CD4-positive, alpha-beta T cell (primary cell): ENCODE measurements at regions of chr20 and their contacts with region 1.

Region 1: GRCh38 chr20:43448748-43449535 is 8.8 kb upstream of the SRSF6 start:
- DNase-seq: peak; percentile 16 to 72 (median 32)
- ATAC-seq: peak; percentile 75
- H3K4me3 ChIP-seq: no peak overlapping the region
- H3K4me3 Mint-ChIP-seq: no peak overlapping the region
- H3K27ac ChIP-seq: no peak overlapping the region
- H3K27ac Mint-ChIP-seq: no peak overlapping the region
- H3K4me1 ChIP-seq: peaks cover 4% of the 10 kb centered on the region
- H3K4me1 Mint-ChIP-seq: peaks cover 6% of the 10 kb centered on the region
- H3K27me3 ChIP-seq: peaks cover 5 to 12% of the 10 kb centered on the region in 2 experiments
- H3K27me3 Mint-ChIP-seq: peaks cover 49% of the 10 kb centered on the region
- CTCF ChIP-seq: peak; percentile 76

Region 2: DNA sequence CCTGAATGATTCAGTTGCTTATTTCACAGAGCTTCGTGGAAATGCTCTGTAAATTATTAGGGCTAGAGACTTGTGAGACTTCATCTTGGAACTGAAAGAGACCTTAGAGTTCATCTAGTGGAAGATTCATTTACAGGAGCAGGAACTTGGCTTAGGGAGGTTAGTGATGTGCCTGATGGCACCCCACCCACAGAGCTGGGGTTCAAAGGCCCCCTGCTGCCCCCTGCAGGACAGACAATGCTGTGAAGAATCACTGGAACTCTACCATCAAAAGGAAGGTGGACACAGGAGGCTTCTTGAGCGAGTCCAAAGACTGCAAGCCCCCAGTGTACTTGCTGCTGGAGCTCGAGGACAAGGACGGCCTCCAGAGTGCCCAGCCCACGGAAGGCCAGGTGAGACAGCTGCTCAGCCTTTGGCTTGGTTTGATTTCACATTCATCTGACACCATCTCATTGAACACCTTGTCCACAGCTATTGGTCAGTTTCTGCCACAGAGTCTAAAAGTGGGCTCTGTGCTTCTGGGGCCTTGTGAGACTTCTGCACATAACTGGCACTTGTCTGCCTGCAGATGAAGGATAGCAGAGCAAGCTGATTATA is 243.1 kb after region 1 on chr20:
- CTCF ChIA-PET with region 1: interaction called, 3 read pairs
- POLR2A ChIA-PET with region 1: no interaction called
- intact Hi-C with region 1: loop called in 1 of 2 experiments (anchors 2 kb)
- DNase-seq: peak; percentile 11 to 68 (median 34)
- ATAC-seq: no peak
- H3K4me3 ChIP-seq: no peak overlapping the region
- H3K4me3 Mint-ChIP-seq: no peak overlapping the region
- H3K27ac ChIP-seq: no peak overlapping the region
- H3K27ac Mint-ChIP-seq: no peak overlapping the region
- H3K4me1 ChIP-seq: no peaks in the 10 kb centered on the region
- H3K4me1 Mint-ChIP-seq: no peaks in the 10 kb centered on the region
- H3K27me3 ChIP-seq: no peaks in the 10 kb centered on the region
- H3K27me3 Mint-ChIP-seq: no peaks in the 10 kb centered on the region
- CTCF ChIP-seq: peak; percentile 52

Region 3: DNA sequence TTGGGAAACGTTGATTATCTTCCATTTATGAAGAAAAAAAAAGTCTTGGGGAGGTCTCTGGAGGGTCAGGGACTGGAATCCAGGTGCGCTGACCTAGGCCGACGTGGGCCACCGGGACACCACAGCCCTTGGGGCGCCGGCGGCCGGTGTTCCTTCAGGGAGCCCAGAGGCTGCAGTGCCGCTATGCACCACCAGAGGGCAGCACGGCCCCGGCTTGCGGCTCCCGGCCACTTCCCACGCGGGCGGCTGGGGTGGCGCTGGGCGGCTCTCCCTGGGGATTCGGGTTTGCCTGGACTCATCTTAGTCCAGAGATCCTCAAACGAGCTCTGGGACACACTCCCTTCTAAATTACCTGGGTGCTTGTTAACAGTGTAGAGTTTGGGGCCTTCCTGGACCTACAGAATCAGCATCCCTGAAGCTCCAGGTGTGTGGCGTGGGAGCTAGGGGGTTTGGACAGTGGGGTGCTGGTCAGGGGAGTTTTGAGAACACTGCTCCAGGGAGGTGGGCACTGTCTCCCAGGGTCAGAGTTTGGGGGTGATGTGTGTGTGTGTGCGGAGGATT is 300.9 kb after region 1 on chr20:
- CTCF ChIA-PET with region 1: no interaction called
- POLR2A ChIA-PET with region 1: no interaction called
- intact Hi-C with region 1: loop called in 1 of 2 experiments (anchors 2 kb)
- DNase-seq: peak; percentile 54 to 92 (median 80)
- ATAC-seq: peak; percentile 84
- H3K4me3 ChIP-seq: no peak overlapping the region
- H3K4me3 Mint-ChIP-seq: no peak overlapping the region
- H3K27ac ChIP-seq: no peak overlapping the region
- H3K27ac Mint-ChIP-seq: no peak overlapping the region
- H3K4me1 ChIP-seq: peaks cover 33% of the 10 kb centered on the region
- H3K4me1 Mint-ChIP-seq: peaks cover 30% of the 10 kb centered on the region
- H3K27me3 ChIP-seq: no peaks in the 10 kb centered on the region
- H3K27me3 Mint-ChIP-seq: no peaks in the 10 kb centered on the region
- CTCF ChIP-seq: peak; percentile 99

Region 4: DNA sequence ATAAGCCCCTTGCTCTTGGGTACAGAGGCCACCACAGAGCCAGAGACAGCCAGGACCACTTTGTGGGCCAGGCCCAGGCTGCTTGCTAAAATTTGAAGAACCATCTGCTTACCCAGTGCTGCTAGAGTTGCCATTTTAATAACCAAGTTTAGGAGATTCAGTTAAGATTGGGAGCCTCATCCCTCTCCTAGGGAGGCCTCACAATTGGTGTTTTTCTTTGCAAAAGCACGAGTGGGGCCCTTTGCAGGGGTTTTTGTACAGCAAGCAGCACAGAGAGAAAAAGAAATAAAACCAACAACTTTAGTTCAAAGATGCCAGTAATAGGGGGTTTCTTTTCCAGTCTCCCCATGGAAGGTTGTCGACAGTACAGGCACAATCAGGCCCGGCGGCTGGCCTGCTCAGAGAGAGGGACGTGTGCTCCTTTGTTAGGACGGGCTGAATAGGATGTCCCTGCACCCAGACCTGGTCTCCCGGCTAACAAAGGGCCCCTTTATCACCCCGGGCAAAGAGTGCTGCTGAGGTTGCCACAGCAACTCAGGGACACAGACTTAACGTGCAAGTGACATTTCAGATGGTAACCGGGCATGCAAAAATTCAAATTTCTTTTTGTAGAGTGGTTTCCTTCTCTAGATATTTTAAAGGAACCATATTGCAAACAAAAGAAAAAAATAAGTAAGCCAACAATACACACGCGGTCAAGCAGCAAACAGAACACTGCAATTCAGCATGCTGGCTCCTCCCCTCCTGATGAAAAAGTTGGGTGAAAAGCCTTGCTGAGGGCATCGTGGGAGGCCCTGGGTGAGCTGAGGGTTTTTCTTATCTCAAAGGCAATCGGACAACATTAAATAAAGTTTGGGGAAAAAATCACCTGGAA is 455.2 kb after region 1 on chr20:
- CTCF ChIA-PET with region 1: no interaction called
- POLR2A ChIA-PET with region 1: no interaction called
- intact Hi-C with region 1: loop called in 1 of 2 experiments (anchors 5 kb)
- DNase-seq: no peak
- ATAC-seq: no peak
- H3K4me3 ChIP-seq: no peak overlapping the region
- H3K4me3 Mint-ChIP-seq: no peak overlapping the region
- H3K27ac ChIP-seq: no peak overlapping the region
- H3K27ac Mint-ChIP-seq: no peak overlapping the region
- H3K4me1 ChIP-seq: no peaks in the 10 kb centered on the region
- H3K4me1 Mint-ChIP-seq: no peaks in the 10 kb centered on the region
- H3K27me3 ChIP-seq: no peaks in the 10 kb centered on the region
- H3K27me3 Mint-ChIP-seq: no peaks in the 10 kb centered on the region
- CTCF ChIP-seq: no peak

Region 5: DNA sequence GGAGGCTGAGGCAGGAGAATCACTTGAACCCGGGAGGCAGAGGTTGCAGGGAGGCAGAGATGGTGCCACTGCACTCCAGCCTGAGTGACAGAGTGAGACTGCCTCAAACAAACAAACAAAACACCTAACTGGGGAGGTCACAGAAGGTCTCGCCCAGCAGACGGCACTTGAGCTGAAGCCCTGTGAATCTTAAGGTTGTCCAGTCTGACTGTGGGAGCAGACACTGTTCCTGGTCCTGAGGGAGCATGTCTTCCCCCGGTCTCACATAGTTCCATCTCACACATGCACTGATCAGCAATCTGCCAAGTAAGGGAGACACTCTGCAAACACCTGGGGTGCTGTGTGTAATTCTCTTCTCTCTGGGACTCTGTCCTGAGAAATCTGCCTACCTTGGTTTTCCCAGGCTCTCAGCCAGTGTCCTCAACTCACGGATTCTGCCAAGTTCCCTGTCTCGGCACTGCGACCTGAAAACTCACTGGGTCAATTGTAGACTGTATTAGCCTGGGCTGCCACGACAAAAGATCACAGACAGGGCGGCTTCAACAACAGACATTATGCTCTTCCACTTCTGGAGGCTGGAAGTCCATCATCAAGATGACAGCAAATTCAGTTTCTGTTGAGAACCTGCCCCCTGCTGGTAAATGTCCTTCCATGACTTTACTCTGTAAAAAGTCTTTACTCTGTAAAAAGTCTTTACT is 643.8 kb after region 1 on chr20:
- CTCF ChIA-PET with region 1: no interaction called
- POLR2A ChIA-PET with region 1: no interaction called
- intact Hi-C with region 1: loop called in 1 of 2 experiments (anchors 5 kb)
- DNase-seq: peak in 5 of 14 experiments; percentile 27 to 59 (median 45)
- ATAC-seq: peak; percentile 52
- H3K4me3 ChIP-seq: no peak overlapping the region
- H3K4me3 Mint-ChIP-seq: no peak overlapping the region
- H3K27ac ChIP-seq: no peak overlapping the region
- H3K27ac Mint-ChIP-seq: no peak overlapping the region
- H3K4me1 ChIP-seq: peaks cover 4% of the 10 kb centered on the region
- H3K4me1 Mint-ChIP-seq: no peaks in the 10 kb centered on the region
- H3K27me3 ChIP-seq: peaks cover 0 to 10% of the 10 kb centered on the region in 2 experiments
- H3K27me3 Mint-ChIP-seq: peaks cover 21% of the 10 kb centered on the region
- CTCF ChIP-seq: peak; percentile 55

Region 6: GRCh38 chr20:44187051-44187762 is 738.3 kb after region 1 on chr20 and contains the start of gene JPH2:
- CTCF ChIA-PET with region 1: no interaction called
- POLR2A ChIA-PET with region 1: no interaction called
- intact Hi-C with region 1: loop called in 1 of 2 experiments (anchors 1 kb)
- DNase-seq: no peak
- ATAC-seq: no peak
- H3K4me3 ChIP-seq: no peak within 1 kb of the TSS
- H3K4me3 Mint-ChIP-seq: no peak within 1 kb of the TSS
- H3K27ac ChIP-seq: no peak within 1 kb of the TSS
- H3K27ac Mint-ChIP-seq: no peak within 1 kb of the TSS
- H3K4me1 ChIP-seq: peaks cover 18% of the 10 kb centered on the region
- H3K4me1 Mint-ChIP-seq: peaks cover 10% of the 10 kb centered on the region
- H3K27me3 ChIP-seq: peaks cover 28 to 51% of the 10 kb centered on the region in 2 experiments
- H3K27me3 Mint-ChIP-seq: peaks cover 74% of the 10 kb centered on the region
- CTCF ChIP-seq: no peak
- total RNA-seq, gene JPH2: not detected